ENCODE measurements at regions of chr11 and their contacts with region 1.

Region 1: DNA sequence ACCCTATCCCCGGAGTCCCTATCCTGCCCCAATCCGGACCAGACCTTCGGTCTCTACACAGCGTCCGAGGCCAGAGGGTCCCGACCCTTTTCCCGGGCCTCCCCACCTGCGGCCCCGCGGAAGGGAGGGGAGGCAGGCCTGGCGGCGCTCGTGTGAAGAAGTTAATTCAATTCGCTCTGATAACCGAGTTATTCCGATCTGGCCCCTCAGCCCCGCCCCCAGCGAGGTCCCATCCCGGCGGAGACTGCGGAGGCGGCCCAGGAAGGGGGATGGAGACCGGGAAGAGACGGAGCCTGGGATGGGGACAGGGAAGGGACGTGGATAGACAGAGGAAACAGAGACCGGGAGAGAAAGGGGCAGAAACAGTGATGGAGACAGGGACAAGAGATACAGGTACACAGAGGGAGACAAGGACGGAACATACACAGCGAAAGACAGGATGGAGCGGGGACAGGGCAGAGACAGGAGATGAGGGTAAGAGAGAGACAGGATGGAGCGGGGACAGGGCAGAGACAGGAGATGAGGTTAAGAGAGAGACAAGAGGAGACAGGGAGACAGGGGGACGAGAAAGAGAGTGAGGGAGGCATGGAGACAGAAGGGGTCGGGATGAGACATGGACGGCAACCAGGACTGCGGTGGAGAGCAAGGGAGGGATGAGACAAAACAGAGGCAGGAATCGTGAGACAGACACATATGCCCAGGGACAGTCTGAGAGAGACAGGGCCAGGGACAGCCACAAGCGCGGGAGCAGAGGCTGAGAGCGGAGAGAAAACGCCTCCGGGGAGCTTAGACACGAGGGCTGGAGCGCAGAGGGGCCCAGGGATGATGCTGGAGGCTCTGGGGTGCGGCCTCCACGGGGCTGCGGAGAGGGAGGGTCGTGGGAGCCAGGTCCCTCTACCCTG is 636 bp upstream of the PHOX2A start:
- DNase-seq: no peak
- H3K4me3 ChIP-seq: no peak overlapping the region
- H3K27ac ChIP-seq: no peak overlapping the region
- H3K4me1 ChIP-seq: no peaks in the 10 kb centered on the region
- CTCF ChIP-seq: no peak

Region 2: DNA sequence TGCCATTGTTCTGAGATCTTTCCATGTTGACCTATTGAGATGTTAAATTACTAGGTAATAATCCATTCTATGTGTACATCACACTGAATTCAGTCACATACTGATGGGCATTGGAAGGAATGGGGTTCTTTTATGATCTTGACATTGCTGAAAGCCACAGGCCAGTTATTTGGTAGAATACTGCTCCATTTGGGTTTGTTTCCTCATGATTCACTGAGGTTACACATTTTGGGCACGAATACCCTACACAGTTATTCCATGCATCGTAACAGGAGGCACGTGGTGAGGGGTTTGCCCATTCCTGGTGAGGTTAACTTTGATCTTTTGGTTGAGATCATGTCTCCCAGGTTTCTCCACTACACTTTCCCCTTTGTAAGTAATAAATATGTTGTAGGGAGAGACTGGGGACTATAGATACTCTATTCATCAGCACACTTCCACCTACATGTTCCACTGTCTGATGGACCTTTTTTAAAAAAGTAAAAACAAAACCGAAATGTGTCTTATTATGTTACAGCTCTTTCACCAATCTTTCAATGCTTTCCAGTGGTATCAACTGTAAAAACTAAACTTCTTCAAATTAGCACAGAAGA is 64.7 kb before region 1 on chr11:
- CTCF ChIA-PET with region 1: interaction called, 10 read pairs
- POLR2A ChIA-PET with region 1: no interaction called
- intact Hi-C with region 1: no loop called
- DNase-seq: no peak
- H3K4me3 ChIP-seq: no peak overlapping the region
- H3K27ac ChIP-seq: no peak overlapping the region
- H3K4me1 ChIP-seq: no peaks in the 10 kb centered on the region
- CTCF ChIP-seq: no peak

Region 3: GRCh38 chr11:72326151-72326848 is 81.7 kb after region 1 on chr11:
- CTCF ChIA-PET with region 1: no interaction called
- POLR2A ChIA-PET with region 1: no interaction called
- intact Hi-C with region 1: no loop called
- DNase-seq: no peak
- H3K4me3 ChIP-seq: no peak overlapping the region
- H3K27ac ChIP-seq: no peak overlapping the region
- H3K4me1 ChIP-seq: no peaks in the 10 kb centered on the region
- CTCF ChIP-seq: no peak

Measured in OCI-LY7 (cell line).